Psoas muscle (tissue), 8 donors: ENCODE measurements at regions of chr12 and their contacts with region 1.

Region 1: DNA sequence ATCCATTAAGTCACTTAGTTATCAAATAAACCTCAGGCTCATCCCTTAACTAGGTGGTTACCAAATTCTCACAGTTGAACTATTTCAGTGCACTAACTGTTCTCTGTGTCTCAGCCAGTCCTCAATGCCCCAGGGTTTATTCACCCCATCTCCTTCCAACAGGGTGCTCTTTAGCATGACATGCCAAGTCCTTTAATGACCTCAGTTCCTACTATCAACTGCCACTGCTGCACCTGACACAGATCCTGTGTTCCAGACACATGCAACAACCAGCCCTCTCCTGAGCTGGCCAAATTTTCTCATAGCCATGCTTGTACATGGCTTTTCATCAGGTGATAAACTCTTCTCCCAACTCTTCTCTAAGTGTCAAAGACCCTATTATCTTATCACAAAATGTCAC is 80.0 kb downstream of the ATXN2 start:
- DNase-seq: no peak
- ATAC-seq: peak in 3 of 4 donors; percentile 57 to 87 (median 75)
- H3K4me3 ChIP-seq: no peak overlapping the region
- H3K27ac ChIP-seq: no peak overlapping the region
- H3K4me1 ChIP-seq: no peaks in the 10 kb centered on the region
- H3K27me3 ChIP-seq: no peaks in the 10 kb centered on the region
- CTCF ChIP-seq: no peak

Region 2: GRCh38 chr12:111893287-111893686 is 374.2 kb after region 1 on chr12:
- intact Hi-C with region 1: loop called in 1 of 2 experiments (anchors 10 kb)
- DNase-seq: no peak
- ATAC-seq: no peak
- H3K4me3 ChIP-seq: no peak overlapping the region
- H3K27ac ChIP-seq: no peak overlapping the region
- H3K4me1 ChIP-seq: no peaks in the 10 kb centered on the region
- H3K27me3 ChIP-seq: no peaks in the 10 kb centered on the region
- CTCF ChIP-seq: no peak